Caco-2 (cell line): ENCODE measurements at regions of chr16 and their contacts with region 1.

Region 1: DNA sequence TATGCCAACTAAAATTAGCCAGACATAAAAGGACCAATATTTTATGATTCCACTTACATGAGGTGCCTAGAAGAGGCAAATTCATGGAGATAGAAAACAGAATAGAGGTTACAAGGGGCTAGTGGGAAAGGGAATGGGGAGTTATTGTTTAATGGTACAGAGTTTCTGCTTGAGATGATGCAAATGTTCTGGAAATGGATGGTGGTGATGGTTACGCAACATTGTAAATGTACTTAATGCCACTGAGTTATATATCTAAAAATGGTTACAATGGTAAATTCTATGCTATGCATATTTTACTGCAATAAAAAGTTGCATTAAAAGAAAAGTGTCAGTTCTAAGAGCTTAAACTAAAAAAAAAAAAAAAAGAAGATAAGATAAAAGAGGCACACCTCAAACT is 17.9 kb downstream of the MT1X start:
- DNase-seq: no peak
- H3K4me3 ChIP-seq: no peak overlapping the region
- H3K4me3 Mint-ChIP-seq: no peak overlapping the region
- H3K27ac Mint-ChIP-seq: no peak overlapping the region
- H3K4me1 ChIP-seq: no peaks in the 10 kb centered on the region
- H3K4me1 Mint-ChIP-seq: peaks cover 4% of the 10 kb centered on the region
- H3K27me3 ChIP-seq: no peaks in the 10 kb centered on the region
- H3K27me3 Mint-ChIP-seq: no peaks in the 10 kb centered on the region
- CTCF ChIP-seq: no peak

Region 2: GRCh38 chr16:56356276-56357240 is 343.6 kb before region 1 on chr16:
- CTCF ChIA-PET with region 1: interaction called, 14 read pairs
- POLR2A ChIA-PET with region 1: no interaction called
- intact Hi-C with region 1: no loop called
- DNase-seq: peak; percentile 89 to 91
- H3K4me3 ChIP-seq: peak overlapping the region; percentile 37
- H3K4me3 Mint-ChIP-seq: peak overlapping the region; percentile 87
- H3K27ac Mint-ChIP-seq: peak overlapping the region; percentile 43
- H3K4me1 ChIP-seq: peaks cover 9% of the 10 kb centered on the region
- H3K4me1 Mint-ChIP-seq: peaks cover 8% of the 10 kb centered on the region
- H3K27me3 ChIP-seq: no peaks in the 10 kb centered on the region
- H3K27me3 Mint-ChIP-seq: no peaks in the 10 kb centered on the region
- CTCF ChIP-seq: peak; percentile 89 to 99

Region 3: GRCh38 chr16:56576585-56577293 is 123.5 kb before region 1 on chr16:
- CTCF ChIA-PET with region 1: interaction called, 10 read pairs
- POLR2A ChIA-PET with region 1: no interaction called
- intact Hi-C with region 1: loop called (anchors 1 kb)
- DNase-seq: peak; percentile 84 to 85
- H3K4me3 ChIP-seq: no peak overlapping the region
- H3K4me3 Mint-ChIP-seq: no peak overlapping the region
- H3K27ac Mint-ChIP-seq: peak overlapping the region; percentile 18
- H3K4me1 ChIP-seq: no peaks in the 10 kb centered on the region
- H3K4me1 Mint-ChIP-seq: no peaks in the 10 kb centered on the region
- H3K27me3 ChIP-seq: no peaks in the 10 kb centered on the region
- H3K27me3 Mint-ChIP-seq: peaks cover 8% of the 10 kb centered on the region
- CTCF ChIP-seq: peak; percentile 64 to 77

Region 4: GRCh38 chr16:56608043-56608875 is 91.9 kb before region 1 on chr16 and contains the start of gene MT2A:
- CTCF ChIA-PET with region 1: interaction called, 95 read pairs
- POLR2A ChIA-PET with region 1: interaction called, 3 read pairs
- intact Hi-C with region 1: loop called (anchors 1 kb)
- DNase-seq: peak; percentile 92 to 93
- H3K4me3 ChIP-seq: peak within 1 kb of the TSS; percentile 39
- H3K4me3 Mint-ChIP-seq: peak within 1 kb of the TSS; percentile 74
- H3K27ac Mint-ChIP-seq: peak within 1 kb of the TSS; percentile 66
- H3K4me1 ChIP-seq: peaks cover 11% of the 10 kb centered on the region; the same call in 1 of the 2 replicates
- H3K4me1 Mint-ChIP-seq: peaks cover 25% of the 10 kb centered on the region
- H3K27me3 ChIP-seq: no peaks in the 10 kb centered on the region; the same call in 1 of the 2 replicates
- H3K27me3 Mint-ChIP-seq: peaks cover 3% of the 10 kb centered on the region
- CTCF ChIP-seq: no peak
- total RNA-seq, gene MT2A: 4.3 and 10.5 TPM in 2 replicates

Region 5: GRCh38 chr16:56673921-56674320 is 26.3 kb before region 1 on chr16:
- CTCF ChIA-PET with region 1: interaction called, 22 read pairs
- POLR2A ChIA-PET with region 1: interaction called, 3 read pairs
- intact Hi-C with region 1: loop called (anchors 1 kb)
- DNase-seq: peak in 1 of 2 experiments; percentile 70
- H3K4me3 ChIP-seq: no peak overlapping the region
- H3K4me3 Mint-ChIP-seq: no peak overlapping the region
- H3K27ac Mint-ChIP-seq: no peak overlapping the region
- H3K4me1 ChIP-seq: peaks cover 7% of the 10 kb centered on the region
- H3K4me1 Mint-ChIP-seq: no peaks in the 10 kb centered on the region
- H3K27me3 ChIP-seq: peaks cover 3% of the 10 kb centered on the region
- H3K27me3 Mint-ChIP-seq: peaks cover 32% of the 10 kb centered on the region
- CTCF ChIP-seq: peak; percentile 70 to 82

Region 6: DNA sequence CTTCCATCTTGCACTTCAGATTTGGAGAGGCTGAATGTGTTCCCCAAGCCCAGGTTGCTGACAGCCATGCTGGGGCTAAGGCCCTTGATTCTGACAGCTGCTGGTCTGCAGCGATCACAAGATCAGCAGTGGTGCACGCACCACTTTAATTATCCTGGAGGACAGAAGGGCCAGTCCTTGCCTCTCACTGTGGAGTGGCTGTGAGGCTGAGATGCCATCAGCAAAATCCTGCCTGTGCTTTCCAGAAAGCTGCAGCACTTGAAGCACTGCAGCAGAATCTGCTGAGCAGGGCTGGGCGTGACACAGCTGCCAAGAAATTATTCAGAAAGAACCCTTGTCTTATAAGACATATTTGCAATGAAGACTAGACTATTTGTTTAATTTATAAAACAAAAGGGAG is 66.8 kb after region 1 on chr16:
- CTCF ChIA-PET with region 1: no interaction called
- POLR2A ChIA-PET with region 1: no interaction called
- intact Hi-C with region 1: no loop called
- DNase-seq: no peak
- H3K4me3 ChIP-seq: no peak overlapping the region
- H3K4me3 Mint-ChIP-seq: no peak overlapping the region
- H3K27ac Mint-ChIP-seq: no peak overlapping the region
- H3K4me1 ChIP-seq: no peaks in the 10 kb centered on the region
- H3K4me1 Mint-ChIP-seq: no peaks in the 10 kb centered on the region
- H3K27me3 ChIP-seq: no peaks in the 10 kb centered on the region
- H3K27me3 Mint-ChIP-seq: no peaks in the 10 kb centered on the region
- CTCF ChIP-seq: no peak

Region 7: DNA sequence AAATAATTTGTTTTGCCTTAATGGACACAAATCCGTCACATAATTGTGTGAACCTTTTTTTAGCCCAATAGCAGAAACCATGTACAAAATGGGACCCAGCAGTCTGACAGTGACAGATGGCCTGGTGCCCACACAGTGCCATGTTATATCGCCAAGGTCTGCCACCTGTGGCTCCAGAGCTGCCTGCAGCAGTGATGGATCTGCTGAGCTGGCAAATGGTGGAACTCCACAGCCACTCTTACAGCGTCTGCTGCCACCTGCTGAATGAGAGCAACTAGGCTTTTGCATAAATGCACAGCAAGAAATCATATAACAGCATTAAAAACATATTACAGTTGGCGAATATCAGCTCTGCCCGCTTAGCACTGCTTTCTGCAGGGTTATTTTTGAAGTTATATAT is 89.2 kb after region 1 on chr16:
- CTCF ChIA-PET with region 1: interaction called, 10 read pairs
- POLR2A ChIA-PET with region 1: interaction called, 3 read pairs
- intact Hi-C with region 1: no loop called
- DNase-seq: peak; percentile 52 to 62
- H3K4me3 ChIP-seq: no peak overlapping the region
- H3K4me3 Mint-ChIP-seq: no peak overlapping the region
- H3K27ac Mint-ChIP-seq: no peak overlapping the region
- H3K4me1 ChIP-seq: peaks cover 13% of the 10 kb centered on the region
- H3K4me1 Mint-ChIP-seq: peaks cover 30% of the 10 kb centered on the region
- H3K27me3 ChIP-seq: no peaks in the 10 kb centered on the region
- H3K27me3 Mint-ChIP-seq: no peaks in the 10 kb centered on the region
- CTCF ChIP-seq: peak; percentile 44 to 60

Region 8: DNA sequence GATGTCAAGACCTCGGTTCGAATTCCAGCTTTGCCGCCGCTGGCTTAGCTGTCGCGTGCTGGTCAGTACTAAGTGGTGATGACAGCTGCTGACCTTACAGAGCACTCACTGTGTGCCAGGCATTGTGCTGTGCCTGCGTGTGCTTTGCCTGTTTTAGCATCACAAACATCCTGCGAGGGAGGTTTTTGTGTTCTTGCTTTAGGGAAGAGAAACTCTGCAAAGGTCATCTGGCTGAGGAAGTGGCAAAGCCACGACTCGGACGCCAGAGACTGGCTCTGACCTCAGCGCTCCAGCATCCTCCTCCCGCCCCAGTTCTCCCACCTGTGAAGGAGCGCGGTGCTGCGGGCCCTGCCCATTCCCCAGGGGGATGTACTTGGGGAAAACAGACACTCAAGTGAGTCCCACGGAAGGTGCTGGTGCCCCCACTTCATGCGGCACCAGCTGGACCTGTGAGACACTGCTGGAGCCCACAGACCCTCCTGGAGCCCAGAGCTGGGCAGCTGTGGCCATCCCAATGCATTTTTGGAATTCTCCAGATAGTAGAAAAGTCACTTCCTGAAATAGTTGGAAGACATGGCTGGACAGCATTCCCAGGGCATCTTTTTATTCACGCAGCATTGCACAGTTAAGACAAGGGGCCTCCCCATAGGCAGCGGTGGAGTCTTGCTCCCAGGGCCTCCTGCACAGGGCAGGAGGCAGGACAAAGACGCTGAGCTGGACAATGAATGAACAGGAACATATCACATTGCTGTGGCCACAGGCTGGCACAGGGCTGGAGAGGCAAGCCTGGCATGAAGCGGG is 211.8 kb after region 1 on chr16:
- CTCF ChIA-PET with region 1: no interaction called
- POLR2A ChIA-PET with region 1: no interaction called
- intact Hi-C with region 1: no loop called
- DNase-seq: peak in 1 of 2 experiments; percentile 48
- H3K4me3 ChIP-seq: no peak overlapping the region
- H3K4me3 Mint-ChIP-seq: peak overlapping the region; percentile 5
- H3K27ac Mint-ChIP-seq: peak overlapping the region; percentile 73
- H3K4me1 ChIP-seq: peaks cover 42% of the 10 kb centered on the region
- H3K4me1 Mint-ChIP-seq: peaks cover 46% of the 10 kb centered on the region
- H3K27me3 ChIP-seq: no peaks in the 10 kb centered on the region
- H3K27me3 Mint-ChIP-seq: no peaks in the 10 kb centered on the region
- CTCF ChIP-seq: no peak

Region 9: GRCh38 chr16:57757326-57757786 is 1057.2 kb after region 1 on chr16:
- CTCF ChIA-PET with region 1: no interaction called
- POLR2A ChIA-PET with region 1: no interaction called
- intact Hi-C with region 1: no loop called
- DNase-seq: peak; percentile 89 to 97
- H3K4me3 ChIP-seq: no peak overlapping the region
- H3K4me3 Mint-ChIP-seq: no peak overlapping the region
- H3K27ac Mint-ChIP-seq: no peak overlapping the region
- H3K4me1 ChIP-seq: peaks cover 17% of the 10 kb centered on the region
- H3K4me1 Mint-ChIP-seq: peaks cover 20% of the 10 kb centered on the region
- H3K27me3 ChIP-seq: no peaks in the 10 kb centered on the region
- H3K27me3 Mint-ChIP-seq: no peaks in the 10 kb centered on the region
- CTCF ChIP-seq: peak; percentile 95 to 99